ENCODE measurements at regions of chr11 and their contacts with region 1.

Region 1: DNA sequence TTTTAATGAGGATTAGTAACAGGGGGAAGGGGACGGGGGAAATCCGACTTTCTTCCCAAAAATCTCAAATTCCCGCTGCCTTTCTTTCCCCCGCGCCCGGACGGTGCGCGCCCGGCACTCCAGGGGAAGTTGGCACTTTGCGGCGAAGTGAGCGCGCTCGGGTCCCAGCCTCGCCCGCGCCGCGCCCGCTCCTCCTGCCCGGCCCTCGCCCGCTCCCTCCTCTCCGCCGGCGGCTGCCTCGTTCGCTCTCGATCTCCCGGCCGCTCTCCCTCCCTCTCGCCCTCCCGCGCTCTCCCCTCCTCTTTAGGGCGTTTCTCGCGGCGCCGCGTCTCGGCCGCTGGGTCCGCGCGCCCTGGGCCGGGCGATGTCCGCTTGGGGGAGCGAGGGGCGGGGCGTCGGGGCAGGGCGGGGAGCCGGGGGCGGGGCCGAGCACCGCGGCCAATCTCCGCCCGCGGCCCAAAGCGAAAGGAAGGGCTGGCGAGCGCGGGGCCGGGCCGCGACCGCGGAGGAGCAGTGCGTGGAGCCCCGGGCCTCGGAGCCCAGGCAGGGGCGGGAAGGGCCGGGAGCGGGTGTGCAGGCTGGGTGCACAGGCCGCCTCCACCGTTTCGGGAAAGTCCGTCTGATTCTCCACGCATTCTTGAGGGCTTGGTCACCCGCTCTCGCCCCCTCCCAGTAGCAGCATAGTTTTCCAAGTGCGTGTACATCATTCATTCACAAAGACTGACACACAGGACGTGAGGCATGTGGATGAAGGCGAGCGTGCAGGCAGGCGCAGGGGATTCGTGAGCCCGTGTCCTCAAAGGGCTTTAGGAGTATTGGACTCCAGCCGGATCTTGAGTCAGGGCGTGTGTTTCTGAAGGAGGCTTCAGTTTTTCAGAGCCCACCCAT is 65.1 kb downstream of the ETS1 start:
- DNase-seq: peak; percentile 80 to 96 (median 91)
- ATAC-seq: peak; percentile 62
- H3K4me3 ChIP-seq: peak overlapping the region; percentile 94 to 97
- H3K4me3 Mint-ChIP-seq: peak overlapping the region; percentile 98
- H3K27ac ChIP-seq: peak overlapping the region; percentile 86 to 91
- H3K27ac Mint-ChIP-seq: peak overlapping the region; percentile 98
- H3K4me1 ChIP-seq: peaks cover 44% of the 10 kb centered on the region
- H3K4me1 Mint-ChIP-seq: peaks cover 50% of the 10 kb centered on the region
- H3K27me3 ChIP-seq: no peaks in the 10 kb centered on the region
- H3K27me3 Mint-ChIP-seq: no peaks in the 10 kb centered on the region
- CTCF ChIP-seq: no peak

Region 2: GRCh38 chr11:128290106-128290840 is 232.0 kb before region 1 on chr11:
- CTCF ChIA-PET with region 1: interaction called, 50 read pairs
- POLR2A ChIA-PET with region 1: interaction called, 50 read pairs
- intact Hi-C with region 1: loop called in 1 of 2 experiments (anchors 5 kb)
- DNase-seq: peak; percentile 48 to 94 (median 71)
- ATAC-seq: peak; percentile 67
- H3K4me3 ChIP-seq: peak overlapping the region; percentile 46 to 51
- H3K4me3 Mint-ChIP-seq: peak overlapping the region; percentile 88
- H3K27ac ChIP-seq: peak overlapping the region; percentile 89 to 90
- H3K27ac Mint-ChIP-seq: peak overlapping the region; percentile 100
- H3K4me1 ChIP-seq: peaks cover 79% of the 10 kb centered on the region
- H3K4me1 Mint-ChIP-seq: peaks cover 92% of the 10 kb centered on the region
- H3K27me3 ChIP-seq: no peaks in the 10 kb centered on the region
- H3K27me3 Mint-ChIP-seq: no peaks in the 10 kb centered on the region
- CTCF ChIP-seq: peak; percentile 92

Region 3: DNA sequence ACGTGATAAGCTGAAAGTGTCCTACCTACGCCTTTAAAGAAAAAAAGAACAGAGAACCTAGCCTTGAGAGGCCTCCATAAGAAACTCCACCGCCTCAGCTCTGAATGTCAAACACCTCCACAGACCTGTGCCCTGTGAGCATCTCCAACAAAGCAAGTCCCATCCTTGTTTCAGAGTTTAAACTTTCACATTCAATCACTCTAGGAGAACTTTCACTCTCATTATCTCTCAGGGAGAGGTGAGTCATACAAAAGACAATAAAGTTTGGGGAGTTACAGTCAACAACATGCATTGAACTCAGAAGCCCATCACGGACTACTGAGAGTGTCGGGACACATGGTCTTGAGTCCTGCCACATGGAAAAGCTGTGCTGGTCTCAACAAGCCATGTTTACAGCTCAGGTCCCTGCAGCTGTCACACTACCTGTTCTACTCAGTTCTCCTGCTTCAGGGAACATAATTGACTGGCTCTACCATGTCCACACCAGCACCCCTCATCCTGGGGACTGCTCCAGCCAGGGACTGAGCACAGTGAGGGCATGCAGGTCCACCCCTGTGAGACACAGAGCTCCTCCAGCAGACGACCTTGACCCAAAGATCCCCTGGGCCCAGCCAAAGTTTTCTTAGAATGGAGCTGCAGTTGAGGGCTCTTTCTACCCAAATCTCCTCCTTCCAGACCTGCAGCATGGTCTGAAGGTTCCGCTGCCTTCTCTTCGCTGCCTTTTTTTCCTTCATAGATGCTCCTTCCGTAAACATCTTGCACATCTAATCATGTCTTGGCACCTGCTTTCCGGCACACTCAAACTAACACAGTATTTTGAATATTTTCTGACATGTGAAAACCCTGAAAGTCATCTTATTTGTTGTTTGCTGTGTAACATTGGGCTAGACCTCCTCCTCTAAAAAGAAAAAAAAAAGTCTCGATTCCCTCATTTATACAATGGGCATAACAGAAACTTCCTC is 49.9 kb before region 1 on chr11:
- CTCF ChIA-PET with region 1: interaction called, 66 read pairs
- POLR2A ChIA-PET with region 1: interaction called, 185 read pairs
- intact Hi-C with region 1: loop called (anchors 2 to 5 kb)
- DNase-seq: peak in 5 of 9 experiments; percentile 46 to 81 (median 63)
- ATAC-seq: peak; percentile 33
- H3K4me3 ChIP-seq: peak overlapping the region; percentile 4 to 33
- H3K4me3 Mint-ChIP-seq: peak overlapping the region; percentile 74
- H3K27ac ChIP-seq: peak overlapping the region; percentile 68 to 88
- H3K27ac Mint-ChIP-seq: peak overlapping the region; percentile 94
- H3K4me1 ChIP-seq: peaks cover 99% of the 10 kb centered on the region
- H3K4me1 Mint-ChIP-seq: peaks cover 99% of the 10 kb centered on the region
- H3K27me3 ChIP-seq: no peaks in the 10 kb centered on the region
- H3K27me3 Mint-ChIP-seq: no peaks in the 10 kb centered on the region
- CTCF ChIP-seq: no peak

Region 4: DNA sequence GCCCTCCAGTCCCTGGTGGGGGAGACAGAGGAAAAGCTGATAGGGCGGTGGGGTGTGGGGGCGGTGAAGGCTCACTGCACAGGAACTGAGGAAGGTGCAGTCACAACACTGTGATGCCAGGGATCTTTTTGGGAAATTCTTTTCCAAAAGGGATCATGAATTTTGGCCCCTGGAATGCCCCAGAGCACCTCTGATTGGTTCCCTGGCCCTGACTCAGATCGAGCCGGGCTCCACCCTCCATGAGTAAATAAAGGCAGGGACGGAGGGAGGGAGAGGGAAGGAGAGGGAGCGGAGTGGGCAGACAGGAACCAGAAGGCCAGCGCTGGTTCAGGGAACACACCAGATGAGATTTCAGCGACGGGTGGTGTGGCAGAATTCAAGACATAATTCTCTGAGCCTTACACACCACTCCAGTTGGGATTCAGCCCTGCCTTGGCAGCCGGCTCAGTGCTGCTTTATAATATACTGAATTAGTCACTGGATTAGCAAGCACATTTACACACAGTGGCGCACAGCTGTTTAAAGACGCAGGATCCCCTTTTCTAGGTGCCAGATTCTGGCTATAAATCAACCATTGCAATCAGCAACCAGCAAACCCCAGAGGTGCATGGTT is 15.2 kb before region 1 on chr11:
- CTCF ChIA-PET with region 1: interaction called, 173 read pairs
- POLR2A ChIA-PET with region 1: interaction called, 270 read pairs
- intact Hi-C with region 1: loop called (anchors 2 kb)
- DNase-seq: peak in 4 of 9 experiments; percentile 51 to 65 (median 60)
- ATAC-seq: peak; percentile 30
- H3K4me3 ChIP-seq: peak overlapping the region; percentile 37 to 94
- H3K4me3 Mint-ChIP-seq: peak overlapping the region; percentile 84
- H3K27ac ChIP-seq: peak overlapping the region; percentile 48 to 75
- H3K27ac Mint-ChIP-seq: peak overlapping the region; percentile 98
- H3K4me1 ChIP-seq: peaks cover 100% of the 10 kb centered on the region
- H3K4me1 Mint-ChIP-seq: peaks cover 97% of the 10 kb centered on the region
- H3K27me3 ChIP-seq: no peaks in the 10 kb centered on the region
- H3K27me3 Mint-ChIP-seq: no peaks in the 10 kb centered on the region
- CTCF ChIP-seq: no peak

Region 5: GRCh38 chr11:128624269-128625175 is 102.2 kb after region 1 on chr11:
- CTCF ChIA-PET with region 1: interaction called, 173 read pairs
- POLR2A ChIA-PET with region 1: interaction called, 274 read pairs
- intact Hi-C with region 1: loop called (anchors 1 kb)
- DNase-seq: peak; percentile 51 to 88 (median 67)
- ATAC-seq: peak; percentile 72
- H3K4me3 ChIP-seq: peak overlapping the region; percentile 6 to 18
- H3K4me3 Mint-ChIP-seq: peak overlapping the region; percentile 56
- H3K27ac ChIP-seq: peak overlapping the region; percentile 48 to 83
- H3K27ac Mint-ChIP-seq: peak overlapping the region; percentile 98
- H3K4me1 ChIP-seq: peaks cover 91% of the 10 kb centered on the region
- H3K4me1 Mint-ChIP-seq: peaks cover 99% of the 10 kb centered on the region
- H3K27me3 ChIP-seq: no peaks in the 10 kb centered on the region
- H3K27me3 Mint-ChIP-seq: no peaks in the 10 kb centered on the region
- CTCF ChIP-seq: no peak

Region 6: DNA sequence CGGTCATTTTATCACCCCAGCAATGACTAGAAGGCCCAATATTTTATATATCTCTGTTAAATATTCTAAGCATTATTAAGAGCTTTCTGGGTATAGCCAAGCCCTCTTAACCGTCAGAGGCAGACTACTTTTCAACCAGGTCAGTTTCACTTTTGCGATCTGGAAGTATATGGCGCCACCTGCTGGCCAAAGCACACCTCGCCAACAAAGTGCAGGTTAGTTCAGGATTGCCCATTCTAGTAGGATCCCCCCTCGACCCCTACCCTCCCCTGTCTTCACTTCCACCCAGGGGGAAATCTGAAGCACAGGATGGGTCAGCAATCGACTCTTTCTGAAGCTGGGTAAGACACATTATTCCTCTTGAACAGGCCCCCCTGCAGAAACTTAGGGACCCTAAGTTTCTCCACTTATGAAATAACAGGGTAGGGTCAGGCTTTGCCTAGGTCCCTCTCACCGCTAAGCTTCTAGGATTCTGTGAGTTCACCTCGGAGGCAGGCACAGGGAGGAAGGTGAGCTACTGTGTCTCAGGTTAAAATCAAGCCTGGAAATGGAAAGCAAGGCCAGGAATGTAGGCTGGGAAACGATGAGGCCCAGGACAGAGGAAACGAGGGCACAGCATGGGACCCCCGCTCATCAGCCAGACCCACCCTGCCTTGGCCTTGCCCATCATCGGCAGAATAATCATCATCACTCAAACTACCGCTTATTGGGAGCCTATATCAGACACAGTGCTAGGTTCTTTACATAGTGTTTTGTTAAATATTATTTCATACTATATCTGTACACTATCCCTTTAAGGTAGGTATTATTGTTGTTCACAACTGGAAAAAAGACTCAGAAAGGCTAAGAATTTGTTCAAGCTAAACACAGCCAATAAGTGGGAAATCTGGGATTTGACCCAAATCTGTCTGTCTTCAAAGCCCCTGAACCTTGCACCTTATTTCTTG is 309.1 kb after region 1 on chr11:
- CTCF ChIA-PET with region 1: interaction called, 7 read pairs
- POLR2A ChIA-PET with region 1: interaction called, 3 read pairs
- intact Hi-C with region 1: loop called (anchors 2 to 10 kb)
- DNase-seq: peak; percentile 75 to 93 (median 88)
- ATAC-seq: peak; percentile 81
- H3K4me3 ChIP-seq: peak overlapping the region; percentile 11 to 26
- H3K4me3 Mint-ChIP-seq: peak overlapping the region; percentile 55
- H3K27ac ChIP-seq: peak overlapping the region; percentile 31 to 84
- H3K27ac Mint-ChIP-seq: peak overlapping the region; percentile 80
- H3K4me1 ChIP-seq: peaks cover 9% of the 10 kb centered on the region
- H3K4me1 Mint-ChIP-seq: peaks cover 18% of the 10 kb centered on the region
- H3K27me3 ChIP-seq: no peaks in the 10 kb centered on the region
- H3K27me3 Mint-ChIP-seq: no peaks in the 10 kb centered on the region
- CTCF ChIP-seq: peak; percentile 87

Measured in CD8-positive, alpha-beta T cell (primary cell).